ENCODE measurements at regions of chr5 and their contacts with region 1.

Region 1: DNA sequence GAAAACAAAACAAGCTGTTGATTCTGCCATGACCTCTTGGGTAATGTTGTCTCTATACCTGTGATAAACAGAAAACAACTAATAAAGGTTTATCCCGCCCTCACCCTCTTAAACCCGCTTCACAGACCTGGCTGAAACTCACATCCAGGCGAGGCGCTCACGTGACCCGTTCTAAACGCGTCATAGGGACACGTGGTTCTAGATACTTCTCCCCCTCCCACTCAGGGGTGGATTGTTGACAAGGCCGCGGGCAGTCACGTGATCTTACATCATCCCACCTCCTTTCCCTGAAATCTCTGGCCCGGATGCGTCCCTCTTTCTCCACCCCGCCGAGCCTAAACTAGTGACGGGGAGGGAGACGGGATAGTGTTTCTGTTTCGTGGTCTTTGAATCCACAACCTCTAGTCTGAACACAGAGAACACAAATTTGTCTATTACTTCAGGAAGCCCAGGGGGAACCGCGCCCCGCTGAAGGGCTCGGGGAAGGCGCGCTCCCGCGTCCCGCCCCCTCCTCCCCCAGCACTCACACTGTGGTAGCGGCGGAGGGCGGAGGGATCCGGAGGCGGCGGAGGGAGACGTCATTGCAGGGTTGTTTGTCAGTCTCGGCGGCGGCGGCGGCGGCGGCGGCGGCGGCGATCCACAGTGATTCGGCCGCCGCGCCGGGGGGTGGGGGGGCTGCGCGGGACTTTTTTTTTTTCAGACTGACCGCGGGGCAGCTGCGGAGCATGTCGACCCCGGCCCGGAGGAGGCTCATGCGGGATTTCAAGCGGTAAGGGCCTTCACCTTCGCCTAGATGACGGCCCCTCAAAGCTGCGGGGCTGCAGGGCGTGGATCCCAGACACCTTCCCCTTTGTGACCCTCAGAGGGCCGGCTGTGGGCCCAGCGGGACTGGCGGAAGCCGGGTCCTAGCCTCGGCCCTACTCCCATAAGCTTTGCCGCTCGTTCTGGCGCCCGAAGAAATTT is at the start of gene UBE2B:
- DNase-seq: peak; percentile 98
- ATAC-seq: peak; percentile 72
- H3K4me3 Mint-ChIP-seq: peak within 1 kb of the TSS; percentile 99
- H3K27ac Mint-ChIP-seq: peak within 1 kb of the TSS; percentile 99
- H3K4me1 Mint-ChIP-seq: peaks cover 53% of the 10 kb centered on the region
- H3K27me3 Mint-ChIP-seq: no peaks in the 10 kb centered on the region
- total RNA-seq, gene UBE2B: 112 to 115 TPM

Region 2: GRCh38 chr5:134004592-134005375 is 366.4 kb before region 1 on chr5 and contains the start of gene VDAC1:
- CTCF ChIA-PET with region 1: no interaction called
- POLR2A ChIA-PET with region 1: no interaction called
- intact Hi-C with region 1: loop called in 1 of 2 experiments (anchors 1 kb)
- DNase-seq: peak; percentile 92
- ATAC-seq: peak; percentile 85
- H3K4me3 Mint-ChIP-seq: peak within 1 kb of the TSS; percentile 94
- H3K27ac Mint-ChIP-seq: peak within 1 kb of the TSS; percentile 98
- H3K4me1 Mint-ChIP-seq: peaks cover 44% of the 10 kb centered on the region
- H3K27me3 Mint-ChIP-seq: no peaks in the 10 kb centered on the region
- total RNA-seq, gene VDAC1: 482 to 486 TPM

Region 3: GRCh38 chr5:134161513-134162395 is 209.4 kb before region 1 on chr5:
- CTCF ChIA-PET with region 1: no interaction called
- POLR2A ChIA-PET with region 1: no interaction called
- intact Hi-C with region 1: no loop called
- DNase-seq: no peak
- ATAC-seq: peak; percentile 82
- H3K4me3 Mint-ChIP-seq: no peak overlapping the region
- H3K27ac Mint-ChIP-seq: peak overlapping the region; percentile 60
- H3K4me1 Mint-ChIP-seq: peaks cover 43% of the 10 kb centered on the region
- H3K27me3 Mint-ChIP-seq: no peaks in the 10 kb centered on the region

Region 4: DNA sequence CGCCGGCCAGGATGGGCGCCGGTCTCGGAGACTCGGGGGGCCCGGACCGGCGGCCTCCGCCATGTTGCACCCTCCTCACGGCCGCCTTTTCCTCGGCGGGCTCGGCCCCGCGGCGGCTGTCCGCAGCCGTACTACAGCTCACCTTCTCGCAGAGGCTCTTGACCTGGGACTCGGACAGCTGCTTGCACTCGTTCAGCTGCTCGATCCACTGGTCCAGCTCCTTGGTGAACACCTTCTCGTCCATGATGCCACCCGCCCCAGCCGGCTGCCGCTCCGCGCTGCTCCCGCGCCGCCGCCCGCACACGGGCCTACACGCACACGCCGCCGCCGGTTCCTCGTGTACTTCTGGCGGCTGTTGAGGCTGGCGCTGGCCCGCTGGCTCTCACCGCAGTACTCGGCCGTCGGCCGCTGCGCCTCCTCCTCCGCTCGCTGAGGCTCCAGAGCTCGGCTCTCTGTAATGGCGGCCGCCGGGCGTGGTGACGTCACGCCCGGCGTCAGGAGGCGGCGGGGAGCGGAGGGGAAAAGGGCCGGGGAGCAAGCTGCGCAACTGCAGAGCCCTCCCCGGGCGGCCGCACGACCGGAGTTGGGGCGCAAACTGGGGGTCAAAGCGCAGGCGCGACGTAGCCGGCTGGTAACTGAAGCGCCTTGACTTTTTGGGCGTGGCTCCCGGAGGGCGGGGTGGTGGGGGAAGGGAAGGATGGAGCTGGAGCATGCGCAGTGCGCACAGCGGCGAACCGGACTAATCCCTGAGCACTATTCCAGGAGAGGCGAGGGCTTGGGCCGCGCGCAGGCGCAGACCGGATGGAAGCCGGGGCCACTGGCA is 145.3 kb before region 1 on chr5 and contains the start of gene PPP2CA:
- CTCF ChIA-PET with region 1: interaction called, 4 read pairs
- POLR2A ChIA-PET with region 1: interaction called, 5 read pairs
- intact Hi-C with region 1: loop called (anchors 1 to 5 kb)
- DNase-seq: peak; percentile 99
- ATAC-seq: peak; percentile 88
- H3K4me3 Mint-ChIP-seq: peak within 1 kb of the TSS; percentile 97
- H3K27ac Mint-ChIP-seq: peak within 1 kb of the TSS; percentile 98
- H3K4me1 Mint-ChIP-seq: peaks cover 47% of the 10 kb centered on the region
- H3K27me3 Mint-ChIP-seq: no peaks in the 10 kb centered on the region
- total RNA-seq, gene PPP2CA: 148 to 154 TPM

Region 5: GRCh38 chr5:134555890-134556311 is 184.7 kb after region 1 on chr5:
- CTCF ChIA-PET with region 1: interaction called, 4 read pairs
- POLR2A ChIA-PET with region 1: no interaction called
- intact Hi-C with region 1: loop called (anchors 1 kb)
- DNase-seq: peak; percentile 96
- ATAC-seq: peak; percentile 97
- H3K4me3 Mint-ChIP-seq: peak overlapping the region; percentile 72
- H3K27ac Mint-ChIP-seq: peak overlapping the region; percentile 99
- H3K4me1 Mint-ChIP-seq: peaks cover 38% of the 10 kb centered on the region
- H3K27me3 Mint-ChIP-seq: no peaks in the 10 kb centered on the region

Region 6: DNA sequence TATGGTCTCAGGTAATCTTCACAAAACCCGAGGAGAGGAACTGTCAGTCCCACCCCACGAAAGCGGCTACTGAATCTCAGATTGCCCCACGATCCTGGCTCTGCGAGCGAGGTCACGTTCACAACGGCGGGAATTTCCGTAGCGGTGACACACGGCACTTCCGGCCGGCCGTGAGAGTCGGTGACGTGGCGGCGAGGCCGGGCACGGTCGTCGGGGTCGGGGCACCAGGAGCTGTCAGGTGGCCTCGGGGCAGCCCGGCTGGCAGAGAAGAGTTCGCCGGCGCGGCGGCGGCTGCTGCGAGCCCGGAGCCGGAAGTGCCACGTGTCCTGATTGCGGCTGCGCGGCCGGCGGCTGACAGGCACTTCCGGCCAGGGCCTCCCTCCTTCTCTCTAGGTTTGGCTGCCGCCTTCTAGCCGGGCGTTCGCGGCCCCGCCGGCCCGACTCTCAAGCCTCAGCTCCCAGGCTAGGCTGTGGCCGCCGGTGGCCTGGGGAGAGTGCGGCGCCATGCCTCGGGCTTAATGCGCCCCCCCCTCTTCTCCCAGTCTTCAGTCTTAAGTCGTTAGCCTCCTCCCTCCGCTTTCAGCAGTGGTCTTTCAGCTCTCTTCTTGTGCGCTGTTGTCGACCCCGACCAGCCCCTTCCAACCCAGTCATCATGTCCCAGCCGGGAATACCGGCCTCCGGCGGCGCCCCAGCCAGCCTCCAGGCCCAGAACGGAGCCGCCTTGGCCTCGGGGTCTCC is 277.4 kb after region 1 on chr5 and contains the start of gene SEC24A:
- CTCF ChIA-PET with region 1: no interaction called
- POLR2A ChIA-PET with region 1: interaction called, 6 read pairs
- intact Hi-C with region 1: loop called (anchors 1 to 5 kb)
- DNase-seq: peak; percentile 96
- ATAC-seq: peak; percentile 88
- H3K4me3 Mint-ChIP-seq: peak within 1 kb of the TSS; percentile 87
- H3K27ac Mint-ChIP-seq: peak within 1 kb of the TSS; percentile 99
- H3K4me1 Mint-ChIP-seq: peaks cover 30% of the 10 kb centered on the region
- H3K27me3 Mint-ChIP-seq: no peaks in the 10 kb centered on the region
- total RNA-seq, gene SEC24A: 32.2 to 41.3 TPM

Region 7: DNA sequence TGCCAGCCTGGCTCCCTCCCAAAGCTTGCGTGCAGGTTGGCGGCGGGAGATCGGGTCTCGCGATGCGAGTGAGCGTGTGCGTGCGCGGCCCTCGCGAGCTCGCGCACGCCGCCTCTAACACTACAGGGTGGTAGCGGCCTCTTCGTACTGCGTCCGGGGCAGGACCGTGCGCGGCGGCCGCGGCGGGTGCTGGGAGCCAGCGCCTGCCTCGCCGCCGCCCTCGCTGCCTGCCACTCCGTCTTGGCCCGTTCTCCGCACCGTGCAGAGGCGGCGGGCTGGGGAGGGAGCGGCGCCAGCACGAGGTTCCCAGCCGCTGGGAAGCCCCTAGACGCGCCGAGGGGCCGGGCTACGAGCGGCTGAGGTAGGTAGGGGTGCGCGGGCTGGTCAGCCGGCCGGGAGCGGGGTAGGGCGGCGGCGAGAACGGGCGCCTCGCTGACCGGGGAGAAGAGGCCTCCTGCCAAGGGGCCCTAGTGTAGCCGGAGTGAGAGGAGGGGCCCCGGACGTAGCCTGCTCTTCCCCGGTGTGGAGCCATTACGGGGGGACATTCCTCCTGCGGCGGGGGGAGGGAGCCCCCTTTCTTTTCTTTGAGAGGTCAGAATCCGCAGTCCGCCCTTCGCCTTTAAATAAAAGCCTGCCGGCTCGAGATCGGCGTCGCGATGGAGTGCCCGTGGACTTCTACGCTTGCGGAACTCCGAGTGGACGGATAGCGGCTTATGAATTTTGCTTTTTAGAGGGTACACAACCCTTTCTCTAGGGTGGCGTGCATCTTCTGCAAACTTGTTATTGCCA is 474.9 kb after region 1 on chr5 and contains the start of gene C5orf24:
- CTCF ChIA-PET with region 1: no interaction called
- POLR2A ChIA-PET with region 1: no interaction called
- intact Hi-C with region 1: loop called in 1 of 2 experiments (anchors 2 kb)
- DNase-seq: peak; percentile 96
- ATAC-seq: peak; percentile 95
- H3K4me3 Mint-ChIP-seq: peak within 1 kb of the TSS; percentile 95
- H3K27ac Mint-ChIP-seq: peak within 1 kb of the TSS; percentile 97
- H3K4me1 Mint-ChIP-seq: peaks cover 29% of the 10 kb centered on the region
- H3K27me3 Mint-ChIP-seq: no peaks in the 10 kb centered on the region
- total RNA-seq, gene C5orf24: 24.5 to 24.9 TPM